ENCODE measurements at regions of chr9 and their contacts with region 1.

Region 1: GRCh38 chr9:137605121-137606004 is at the start of gene ARRDC1:
- DNase-seq: peak; percentile 97
- ATAC-seq: peak; percentile 92
- H3K4me3 Mint-ChIP-seq: peak within 1 kb of the TSS; percentile 76
- H3K27ac Mint-ChIP-seq: no peak within 1 kb of the TSS
- H3K4me1 Mint-ChIP-seq: peaks cover 24% of the 10 kb centered on the region
- H3K27me3 Mint-ChIP-seq: no peaks in the 10 kb centered on the region
- total RNA-seq, gene ARRDC1: 32.4 to 41.6 TPM

Region 2: GRCh38 chr9:137150617-137151457 is 454.5 kb before region 1 on chr9:
- CTCF ChIA-PET with region 1: interaction called, 3 read pairs
- POLR2A ChIA-PET with region 1: no interaction called
- intact Hi-C with region 1: loop called in 1 of 2 experiments (anchors 1 kb)
- DNase-seq: peak; percentile 90
- ATAC-seq: peak; percentile 80
- H3K4me3 Mint-ChIP-seq: no peak overlapping the region
- H3K27ac Mint-ChIP-seq: no peak overlapping the region
- H3K4me1 Mint-ChIP-seq: peaks cover 8% of the 10 kb centered on the region
- H3K27me3 Mint-ChIP-seq: peaks cover 8% of the 10 kb centered on the region

Region 3: GRCh38 chr9:137453643-137454081 is 151.7 kb before region 1 on chr9:
- CTCF ChIA-PET with region 1: no interaction called
- POLR2A ChIA-PET with region 1: no interaction called
- intact Hi-C with region 1: loop called in 1 of 2 experiments (anchors 1 kb)
- DNase-seq: peak; percentile 84
- ATAC-seq: peak; percentile 83
- H3K4me3 Mint-ChIP-seq: no peak overlapping the region
- H3K27ac Mint-ChIP-seq: no peak overlapping the region
- H3K4me1 Mint-ChIP-seq: peaks cover 38% of the 10 kb centered on the region
- H3K27me3 Mint-ChIP-seq: no peaks in the 10 kb centered on the region

Region 4: GRCh38 chr9:137551651-137552384 is 53.5 kb before region 1 on chr9 and contains the start of gene MRPL41:
- CTCF ChIA-PET with region 1: no interaction called
- POLR2A ChIA-PET with region 1: no interaction called
- intact Hi-C with region 1: loop called in 1 of 2 experiments (anchors 1 kb)
- DNase-seq: peak; percentile 91
- ATAC-seq: peak; percentile 93
- H3K4me3 Mint-ChIP-seq: peak within 1 kb of the TSS; percentile 77
- H3K27ac Mint-ChIP-seq: peak within 1 kb of the TSS; percentile 63
- H3K4me1 Mint-ChIP-seq: peaks cover 11% of the 10 kb centered on the region
- H3K27me3 Mint-ChIP-seq: no peaks in the 10 kb centered on the region
- total RNA-seq, gene MRPL41: 20.9 to 26.8 TPM

Region 5: DNA sequence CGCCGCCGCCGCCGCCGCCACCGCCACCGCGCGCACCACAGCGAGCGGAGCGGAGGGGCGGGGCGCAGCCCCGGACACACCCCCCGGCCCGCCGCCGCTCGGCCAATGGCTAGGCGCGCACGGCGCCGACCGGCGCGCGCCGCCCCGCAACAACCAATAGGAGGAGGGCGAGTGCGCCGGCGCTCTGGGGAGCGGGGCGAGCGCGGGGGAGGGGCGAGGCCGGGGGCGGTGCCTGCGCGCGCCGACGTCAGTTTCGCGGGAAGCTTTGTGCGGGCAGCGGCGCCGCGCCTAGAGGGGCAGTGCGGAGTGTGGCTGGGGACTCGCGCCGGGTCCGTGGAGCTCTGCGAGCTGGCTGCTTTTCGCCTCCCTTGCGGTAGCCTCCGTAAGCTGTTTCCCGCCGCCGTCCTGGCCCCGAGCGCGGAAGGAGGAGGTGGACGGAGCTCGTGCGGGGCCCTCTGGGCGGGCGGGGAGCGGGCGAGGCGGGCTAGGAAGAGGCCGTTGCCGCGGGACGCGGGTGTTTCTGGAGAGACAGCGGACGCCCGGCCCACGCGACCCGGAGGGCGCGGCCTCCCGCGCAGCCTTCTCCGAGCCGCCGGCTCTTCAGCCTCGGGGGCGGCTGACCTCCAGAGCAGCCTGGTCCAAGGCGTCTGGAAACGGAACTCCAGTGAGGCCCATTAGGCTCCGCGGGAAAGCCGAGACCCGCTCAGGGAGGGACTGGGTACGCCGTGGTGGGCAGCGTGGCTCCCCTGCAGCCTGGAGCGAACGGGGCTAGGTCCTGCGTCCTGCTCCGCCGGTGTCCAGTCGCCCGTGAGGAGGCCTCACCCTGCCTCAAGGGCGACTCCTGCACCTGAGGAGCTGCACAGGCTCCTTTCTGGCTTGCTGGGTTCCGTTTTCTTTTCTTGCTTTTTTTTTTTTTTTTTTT is 14.6 kb before region 1 on chr9 and contains the start of gene ZMYND19:
- CTCF ChIA-PET with region 1: interaction called, 3 read pairs
- POLR2A ChIA-PET with region 1: interaction called, 4 read pairs
- intact Hi-C with region 1: loop called (anchors 1 kb)
- DNase-seq: peak; percentile 94
- ATAC-seq: peak; percentile 97
- H3K4me3 Mint-ChIP-seq: peak within 1 kb of the TSS; percentile 87
- H3K27ac Mint-ChIP-seq: peak within 1 kb of the TSS; percentile 95
- H3K4me1 Mint-ChIP-seq: peaks cover 17% of the 10 kb centered on the region
- H3K27me3 Mint-ChIP-seq: no peaks in the 10 kb centered on the region
- total RNA-seq, gene ZMYND19: 36.2 to 43.0 TPM

Region 6: DNA sequence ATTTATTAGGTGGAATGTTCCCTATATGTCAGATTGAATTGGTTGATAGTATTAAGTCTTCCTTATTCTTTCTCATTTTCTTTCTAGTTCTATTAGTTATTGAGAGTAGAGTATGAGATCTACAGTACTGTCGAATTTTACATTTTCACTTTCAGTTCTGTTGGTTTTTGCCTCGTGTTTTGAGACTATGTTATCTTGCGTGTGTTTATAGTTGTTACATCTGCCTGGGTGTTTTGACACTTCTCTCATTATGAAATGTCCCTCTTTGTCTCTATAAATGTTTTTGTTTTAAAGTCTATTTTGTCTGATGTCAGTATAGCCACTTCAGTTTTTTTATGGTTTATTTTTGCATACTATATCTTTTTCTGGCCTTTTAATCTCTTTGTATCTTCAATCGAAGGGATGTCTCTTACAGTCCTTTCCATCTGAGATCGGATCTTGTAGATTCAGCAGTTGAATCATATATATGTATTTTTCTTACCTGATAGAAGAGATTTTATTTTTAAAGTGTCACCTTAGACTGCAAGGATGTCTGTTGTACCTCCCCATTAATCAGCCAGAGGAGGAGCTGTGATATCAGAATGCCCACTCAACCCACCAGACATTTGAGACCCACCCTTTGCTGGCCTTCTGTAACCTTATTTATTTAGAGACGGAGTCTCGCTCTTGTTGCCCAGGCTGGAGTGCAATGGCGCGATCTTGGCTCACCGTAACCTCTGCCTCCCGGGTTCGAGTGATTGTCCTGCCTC is 34.1 kb after region 1 on chr9:
- CTCF ChIA-PET with region 1: no interaction called
- POLR2A ChIA-PET with region 1: no interaction called
- intact Hi-C with region 1: loop called in 1 of 2 experiments (anchors 1 kb)
- DNase-seq: no peak
- ATAC-seq: peak; percentile 97
- H3K4me3 Mint-ChIP-seq: peak overlapping the region; percentile 65
- H3K27ac Mint-ChIP-seq: peak overlapping the region; percentile 89
- H3K4me1 Mint-ChIP-seq: peaks cover 46% of the 10 kb centered on the region
- H3K27me3 Mint-ChIP-seq: no peaks in the 10 kb centered on the region

Measured in activated CD4-positive, alpha-beta T cell treated with anti-CD3 and anti-CD28 coated beads for 36 hours (primary cell).